Activated CD8-positive, alpha-beta T cell treated with anti-CD3 and anti-CD28 coated beads for 36 hours (primary cell): ENCODE measurements at regions of chr17 and their contacts with region 1.

Region 1: GRCh38 chr17:8248751-8249607 is at the start of gene PFAS:
- DNase-seq: peak; percentile 98
- ATAC-seq: peak; percentile 53
- H3K4me3 Mint-ChIP-seq: peak within 1 kb of the TSS; percentile 99
- H3K27ac Mint-ChIP-seq: peak within 1 kb of the TSS; percentile 100
- H3K4me1 Mint-ChIP-seq: peaks cover 31% of the 10 kb centered on the region
- H3K27me3 Mint-ChIP-seq: no peaks in the 10 kb centered on the region
- CTCF ChIP-seq: no peak
- total RNA-seq, gene PFAS: 152 to 157 TPM

Region 2: DNA sequence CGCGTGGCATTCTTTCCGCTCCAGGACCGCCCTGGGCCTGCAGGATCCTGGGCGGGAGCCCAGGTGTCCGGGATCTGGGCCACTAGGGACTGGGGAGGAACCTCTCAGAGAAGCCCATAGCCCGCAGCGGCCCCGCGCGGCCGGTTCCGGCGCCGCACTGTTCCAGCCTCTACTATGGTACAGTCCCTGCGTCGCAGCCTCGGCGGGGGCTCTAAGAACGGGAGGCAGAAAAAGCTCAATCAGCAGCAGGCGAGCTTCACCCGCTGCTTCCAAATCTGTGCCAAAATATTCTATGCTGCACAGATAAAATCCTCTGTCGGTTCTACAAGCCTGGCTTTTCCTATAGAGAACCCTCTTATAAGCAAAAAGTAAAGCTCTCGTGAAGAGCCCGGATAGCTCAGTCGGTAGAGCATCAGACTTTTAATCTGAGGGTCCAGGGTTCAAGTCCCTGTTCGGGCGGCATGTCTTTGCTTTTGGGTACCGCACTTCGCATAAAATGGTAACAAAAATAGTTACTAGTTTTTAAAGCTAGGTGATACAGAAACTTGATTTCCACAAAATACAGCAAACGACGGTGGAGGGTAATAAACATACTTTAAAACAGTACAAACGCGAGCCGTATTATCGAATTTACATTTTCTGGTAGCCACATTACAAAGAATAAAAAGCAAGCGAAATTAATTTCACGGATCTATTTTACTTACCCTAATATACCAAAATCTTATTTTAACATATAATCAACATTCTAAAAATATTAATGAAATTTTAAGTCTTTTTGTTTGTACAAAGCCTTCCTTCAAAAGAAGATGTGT is 130.0 kb before region 1 on chr17:
- CTCF ChIA-PET with region 1: interaction called, 7 read pairs
- POLR2A ChIA-PET with region 1: interaction called, 28 read pairs
- intact Hi-C with region 1: no loop called
- DNase-seq: peak; percentile 95
- ATAC-seq: peak; percentile 57
- H3K4me3 Mint-ChIP-seq: peak overlapping the region; percentile 97
- H3K27ac Mint-ChIP-seq: peak overlapping the region; percentile 95
- H3K4me1 Mint-ChIP-seq: peaks cover 35% of the 10 kb centered on the region
- H3K27me3 Mint-ChIP-seq: peaks cover 43% of the 10 kb centered on the region
- CTCF ChIP-seq: peak; percentile 94

Region 3: DNA sequence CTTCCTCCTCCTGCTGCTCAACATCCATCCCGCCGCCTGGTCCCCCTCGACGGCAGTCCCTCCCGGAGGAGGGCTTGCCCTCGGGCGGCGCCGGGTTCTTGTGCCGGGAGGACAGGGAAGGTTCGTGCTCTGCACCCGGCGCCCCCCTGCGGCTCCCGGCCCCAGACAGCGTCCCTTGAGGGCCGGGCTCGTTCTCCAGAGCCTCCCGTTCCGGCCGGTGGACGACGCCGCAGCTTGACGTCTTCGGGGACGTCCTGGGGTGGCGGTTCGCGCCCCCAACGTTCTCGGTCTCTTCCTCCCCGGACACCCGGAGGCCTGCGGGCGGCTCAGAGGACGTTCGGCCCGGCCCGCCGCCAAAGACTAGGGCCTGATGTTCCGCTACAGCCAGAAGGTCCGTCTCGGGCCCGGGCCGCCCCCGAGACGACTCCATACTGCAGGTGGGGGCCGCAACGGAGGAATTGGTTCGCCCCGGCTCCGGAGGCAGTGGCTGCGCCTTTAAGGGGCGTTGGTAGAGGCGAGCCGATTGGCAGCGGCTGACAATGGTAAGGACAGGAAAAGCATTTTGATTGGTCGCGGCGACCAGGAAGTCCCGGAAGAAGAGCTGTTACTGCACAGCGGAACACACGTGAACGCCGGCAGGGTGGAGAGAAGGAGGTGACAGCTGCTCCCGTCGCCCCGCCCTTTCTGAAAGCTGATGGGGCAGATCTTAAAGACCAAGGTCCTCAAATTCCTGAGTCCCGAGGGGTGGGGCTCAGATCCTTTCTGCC is 59.1 kb before region 1 on chr17 and contains the start of gene BORCS6:
- CTCF ChIA-PET with region 1: interaction called, 30 read pairs
- POLR2A ChIA-PET with region 1: interaction called, 20 read pairs
- intact Hi-C with region 1: loop called (anchors 2 kb)
- DNase-seq: peak; percentile 98
- ATAC-seq: peak; percentile 67
- H3K4me3 Mint-ChIP-seq: no peak within 1 kb of the TSS
- H3K27ac Mint-ChIP-seq: peak within 1 kb of the TSS; percentile 90
- H3K4me1 Mint-ChIP-seq: peaks cover 10% of the 10 kb centered on the region
- H3K27me3 Mint-ChIP-seq: no peaks in the 10 kb centered on the region
- CTCF ChIP-seq: no peak
- total RNA-seq, gene BORCS6: 5.5 to 6.2 TPM

Region 4: DNA sequence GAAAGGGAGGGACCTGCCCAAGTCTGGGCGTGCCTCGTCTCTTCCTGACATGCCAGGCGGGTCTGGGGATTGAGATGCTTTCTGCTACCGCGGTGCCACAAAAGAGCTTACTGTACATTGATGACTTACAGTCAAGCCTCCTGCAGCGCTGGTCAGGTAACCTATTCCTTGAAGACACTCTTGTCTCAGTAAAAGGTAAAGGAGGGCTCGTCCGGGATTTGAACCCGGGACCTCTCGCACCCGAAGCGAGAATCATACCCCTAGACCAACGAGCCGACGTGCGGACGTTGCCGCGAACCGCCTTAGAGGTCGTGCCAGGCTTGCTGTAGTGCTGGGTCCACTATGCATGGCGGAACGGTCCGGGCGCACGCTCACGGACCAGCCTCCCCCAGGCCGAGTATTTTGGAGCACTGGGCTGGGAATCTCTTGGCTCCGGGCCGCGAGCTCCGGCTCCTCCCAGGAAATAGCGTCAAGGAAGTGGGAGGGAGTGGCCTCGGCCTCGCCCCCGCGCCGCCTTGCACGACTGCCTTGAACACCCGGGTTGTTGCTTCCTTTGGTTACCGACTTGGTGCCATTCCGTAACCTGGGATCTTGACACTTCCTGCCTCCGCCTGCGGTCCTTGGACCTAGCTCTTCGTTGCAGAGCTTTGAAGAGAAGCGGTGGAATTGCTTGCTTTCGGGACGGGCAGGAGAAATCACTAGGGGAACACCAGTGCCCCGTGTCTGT is 26.2 kb before region 1 on chr17:
- CTCF ChIA-PET with region 1: interaction called, 15 read pairs
- POLR2A ChIA-PET with region 1: interaction called, 232 read pairs
- intact Hi-C with region 1: no loop called
- DNase-seq: peak; percentile 95
- ATAC-seq: peak; percentile 40
- H3K4me3 Mint-ChIP-seq: peak overlapping the region; percentile 97
- H3K27ac Mint-ChIP-seq: peak overlapping the region; percentile 99
- H3K4me1 Mint-ChIP-seq: peaks cover 34% of the 10 kb centered on the region
- H3K27me3 Mint-ChIP-seq: peaks cover 8% of the 10 kb centered on the region
- CTCF ChIP-seq: no peak

Region 5: DNA sequence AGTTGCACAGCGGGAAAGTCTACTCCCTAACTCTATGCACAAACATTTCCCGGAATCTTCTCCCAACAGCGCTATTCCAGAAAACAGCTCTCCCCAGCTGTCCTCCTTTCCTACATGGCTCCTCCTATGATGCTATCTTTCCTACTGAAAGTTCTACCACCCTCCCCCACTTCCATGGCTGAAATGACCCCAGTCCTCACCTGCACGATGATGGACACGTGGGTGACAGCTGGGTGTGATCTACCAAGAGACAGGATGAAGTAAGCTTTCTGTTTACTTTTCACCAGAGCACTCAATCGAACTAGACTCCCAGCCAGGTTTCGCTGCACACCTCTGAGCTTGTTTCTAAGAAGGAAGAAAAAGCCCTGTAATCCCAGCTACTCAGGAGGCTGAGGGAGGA is 11.8 kb before region 1 on chr17:
- CTCF ChIA-PET with region 1: interaction called, 5 read pairs
- POLR2A ChIA-PET with region 1: interaction called, 45 read pairs
- intact Hi-C with region 1: no loop called
- DNase-seq: no peak
- ATAC-seq: no peak
- H3K4me3 Mint-ChIP-seq: no peak overlapping the region
- H3K27ac Mint-ChIP-seq: no peak overlapping the region
- H3K4me1 Mint-ChIP-seq: peaks cover 11% of the 10 kb centered on the region
- H3K27me3 Mint-ChIP-seq: no peaks in the 10 kb centered on the region
- CTCF ChIP-seq: no peak

Region 6: DNA sequence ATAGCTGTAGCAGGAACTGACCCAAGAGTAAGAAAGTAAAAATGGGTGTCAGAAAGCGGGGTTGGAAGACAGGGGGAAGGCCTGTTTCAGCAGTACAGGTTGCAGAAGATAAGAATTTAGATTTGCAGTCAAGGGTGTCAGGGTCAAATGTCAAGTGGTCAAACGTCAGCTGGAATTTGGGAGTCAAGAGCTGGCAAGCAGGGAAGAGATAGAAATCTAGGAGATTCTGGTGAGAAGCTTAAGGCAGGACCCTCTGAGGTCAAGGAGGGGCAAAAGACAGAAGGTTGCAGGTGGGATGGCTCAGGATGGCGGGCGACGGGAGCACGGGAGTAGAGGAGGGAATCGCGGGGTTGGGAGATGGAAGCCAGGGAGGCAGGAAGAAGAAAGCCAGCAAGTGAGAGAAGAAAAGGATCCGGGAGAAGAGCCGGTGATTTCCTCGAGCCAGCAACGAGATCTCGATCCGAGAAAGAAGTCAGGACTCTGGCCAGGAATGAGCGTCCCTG is 45.9 kb after region 1 on chr17:
- CTCF ChIA-PET with region 1: interaction called, 8 read pairs
- POLR2A ChIA-PET with region 1: interaction called, 26 read pairs
- intact Hi-C with region 1: no loop called
- DNase-seq: no peak
- ATAC-seq: no peak
- H3K4me3 Mint-ChIP-seq: peak overlapping the region; percentile 77
- H3K27ac Mint-ChIP-seq: peak overlapping the region; percentile 78
- H3K4me1 Mint-ChIP-seq: peaks cover 32% of the 10 kb centered on the region
- H3K27me3 Mint-ChIP-seq: no peaks in the 10 kb centered on the region
- CTCF ChIP-seq: no peak